OCI-LY7 (cell line): ENCODE measurements at regions of chr12 and their contacts with region 1.

Region 1: GRCh38 chr12:53508534-53509199 is 1.4 kb upstream of the NPFF start:
- DNase-seq: peak; percentile 88
- H3K4me3 ChIP-seq: no peak overlapping the region
- H3K27ac ChIP-seq: no peak overlapping the region
- H3K4me1 ChIP-seq: peaks cover 7% of the 10 kb centered on the region
- CTCF ChIP-seq: peak; percentile 92

Region 2: DNA sequence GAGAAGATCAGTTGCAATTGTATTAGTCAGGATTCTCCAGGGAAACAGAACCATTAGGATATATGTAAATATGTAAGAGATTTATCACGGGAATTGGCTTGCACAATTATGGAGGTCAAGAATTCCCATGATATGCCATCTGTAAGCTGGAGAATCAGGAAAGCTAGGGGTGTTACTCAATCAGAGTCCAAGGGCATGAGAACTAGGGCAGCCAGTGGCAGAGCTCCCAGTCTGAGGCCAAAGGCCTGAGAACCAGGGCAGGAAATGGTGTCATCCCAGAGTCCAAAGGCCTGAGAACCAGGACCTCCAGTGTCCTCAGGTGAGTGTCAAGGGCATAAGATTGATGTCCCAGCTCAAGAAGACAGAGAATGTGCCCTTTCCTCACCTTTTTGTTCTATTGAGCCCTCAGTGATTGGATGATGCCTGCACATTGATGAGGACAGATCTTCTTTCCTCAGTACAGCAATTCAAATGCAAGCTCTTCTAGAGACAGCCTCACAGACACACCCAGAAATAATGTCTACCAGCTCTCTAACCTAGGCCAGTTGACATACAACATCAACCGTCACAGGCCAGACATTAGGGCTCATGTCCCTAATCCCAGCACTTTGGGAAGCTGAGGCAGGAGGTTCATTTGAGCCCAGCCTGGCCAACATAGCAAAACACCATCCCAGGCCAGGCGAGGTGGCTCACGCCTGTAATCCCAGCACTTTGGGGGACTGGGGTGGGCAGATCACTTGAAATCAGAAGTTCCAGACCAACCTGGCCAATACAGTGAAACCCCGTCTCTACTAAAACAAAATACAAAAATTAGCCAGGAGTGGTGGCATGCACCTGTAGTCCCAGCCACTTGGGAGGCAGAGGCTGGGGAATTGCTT is 363.0 kb before region 1 on chr12:
- CTCF ChIA-PET with region 1: no interaction called
- POLR2A ChIA-PET with region 1: no interaction called
- intact Hi-C with region 1: no loop called
- DNase-seq: no peak
- H3K4me3 ChIP-seq: no peak overlapping the region
- H3K27ac ChIP-seq: no peak overlapping the region
- H3K4me1 ChIP-seq: no peaks in the 10 kb centered on the region
- CTCF ChIP-seq: no peak

Region 3: DNA sequence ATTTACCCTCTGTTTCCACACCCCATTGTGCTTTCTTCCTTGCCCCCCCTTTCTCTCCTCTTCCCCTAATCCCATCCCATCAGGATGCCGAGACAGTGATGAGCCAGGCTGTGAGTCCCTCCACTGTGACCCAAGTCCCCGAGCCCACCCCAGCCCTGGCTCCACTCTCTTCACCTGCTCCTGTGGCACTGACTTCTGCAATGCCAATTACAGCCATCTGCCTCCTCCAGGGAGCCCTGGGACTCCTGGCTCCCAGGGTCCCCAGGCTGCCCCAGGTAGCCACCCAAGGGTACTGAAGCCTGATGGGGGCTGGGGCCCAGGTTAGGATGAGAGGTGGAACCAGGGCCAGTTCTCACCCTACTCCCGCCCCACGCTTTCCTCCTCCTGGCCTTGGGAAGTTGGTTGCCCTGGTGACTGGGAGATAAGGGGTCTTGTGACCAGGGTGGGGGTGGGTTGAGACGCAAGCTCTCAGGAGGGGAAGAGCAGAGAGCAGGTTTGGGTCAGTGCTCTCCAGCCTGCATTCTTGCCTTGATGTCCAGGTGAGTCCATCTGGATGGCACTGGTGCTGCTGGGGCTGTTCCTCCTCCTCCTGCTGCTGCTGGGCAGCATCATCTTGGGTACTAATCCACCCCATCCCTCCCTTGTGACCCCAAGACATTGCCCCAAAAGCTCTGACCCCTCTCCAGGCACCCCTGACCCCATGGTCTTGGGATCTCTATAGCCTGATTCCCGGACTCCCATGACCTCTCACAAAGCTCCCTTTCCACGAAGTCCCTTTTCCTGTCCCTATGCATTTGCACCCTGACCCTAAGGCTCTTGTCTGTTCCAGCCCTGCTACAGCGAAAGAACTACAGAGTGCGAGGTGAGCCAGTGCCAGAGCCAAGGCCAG is 83.8 kb before region 1 on chr12:
- CTCF ChIA-PET with region 1: interaction called, 4 read pairs
- POLR2A ChIA-PET with region 1: no interaction called
- intact Hi-C with region 1: loop called (anchors 5 kb)
- DNase-seq: no peak
- H3K4me3 ChIP-seq: no peak overlapping the region
- H3K27ac ChIP-seq: no peak overlapping the region
- H3K4me1 ChIP-seq: peaks cover 4% of the 10 kb centered on the region
- CTCF ChIP-seq: no peak